ENCODE measurements at regions of chr12 and their contacts with region 1.

Region 1: DNA sequence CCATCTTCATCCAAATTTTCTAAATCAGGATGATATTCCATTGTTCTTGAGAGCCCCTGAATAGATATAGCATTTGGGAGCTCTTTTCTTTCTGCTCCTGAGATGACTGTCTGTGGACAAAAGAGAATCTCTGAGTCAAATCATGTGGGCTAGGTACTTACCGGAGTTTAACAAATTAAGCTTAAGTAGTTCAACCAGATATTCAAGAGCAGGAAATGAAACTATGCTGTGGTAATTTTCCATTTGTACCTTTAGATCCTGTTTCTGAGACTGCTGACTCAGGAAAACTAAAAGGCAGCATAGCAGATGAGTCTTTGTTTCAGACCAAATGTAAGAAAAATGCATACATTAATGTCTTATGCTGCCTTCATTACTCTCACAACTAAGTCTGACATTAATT is at the start of gene CLEC7A:
- DNase-seq: no peak
- H3K4me3 Mint-ChIP-seq: no peak within 1 kb of the TSS
- H3K27ac Mint-ChIP-seq: no peak within 1 kb of the TSS
- H3K4me1 Mint-ChIP-seq: peaks cover 16% of the 10 kb centered on the region
- H3K27me3 Mint-ChIP-seq: peaks cover 6% of the 10 kb centered on the region
- total RNA-seq, gene CLEC7A: not detected

Region 2: DNA sequence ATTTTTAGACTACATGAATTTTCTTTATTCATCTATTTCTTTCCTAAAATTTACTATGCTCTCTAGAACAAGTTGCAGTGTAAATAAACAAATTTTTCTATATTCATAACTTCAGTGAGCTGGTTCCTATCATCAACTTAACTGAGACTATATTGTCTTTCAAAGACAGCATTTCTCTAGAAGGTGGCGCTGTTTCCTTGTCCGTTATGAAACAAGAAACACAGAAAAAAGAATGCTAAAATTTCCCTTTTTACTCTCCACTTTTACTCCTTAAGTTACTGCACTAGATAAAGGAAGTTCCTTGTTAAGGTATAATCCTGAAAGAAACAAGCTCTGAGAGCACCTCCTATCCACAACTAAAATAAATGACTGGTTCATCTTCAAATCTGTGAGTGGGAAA is 189.7 kb before region 1 on chr12:
- CTCF ChIA-PET with region 1: no interaction called
- POLR2A ChIA-PET with region 1: no interaction called
- intact Hi-C with region 1: loop called (anchors 5 kb)
- DNase-seq: no peak
- H3K4me3 Mint-ChIP-seq: no peak overlapping the region
- H3K27ac Mint-ChIP-seq: no peak overlapping the region
- H3K4me1 Mint-ChIP-seq: peaks cover 16% of the 10 kb centered on the region
- H3K27me3 Mint-ChIP-seq: peaks cover 4% of the 10 kb centered on the region

Region 3: GRCh38 chr12:10147714-10148403 is 17.8 kb after region 1 on chr12:
- CTCF ChIA-PET with region 1: interaction called, 4 read pairs
- POLR2A ChIA-PET with region 1: no interaction called
- intact Hi-C with region 1: loop called (anchors 1 kb)
- DNase-seq: no peak
- H3K4me3 Mint-ChIP-seq: no peak overlapping the region
- H3K27ac Mint-ChIP-seq: no peak overlapping the region
- H3K4me1 Mint-ChIP-seq: peaks cover 10% of the 10 kb centered on the region
- H3K27me3 Mint-ChIP-seq: peaks cover 13% of the 10 kb centered on the region

Region 4: DNA sequence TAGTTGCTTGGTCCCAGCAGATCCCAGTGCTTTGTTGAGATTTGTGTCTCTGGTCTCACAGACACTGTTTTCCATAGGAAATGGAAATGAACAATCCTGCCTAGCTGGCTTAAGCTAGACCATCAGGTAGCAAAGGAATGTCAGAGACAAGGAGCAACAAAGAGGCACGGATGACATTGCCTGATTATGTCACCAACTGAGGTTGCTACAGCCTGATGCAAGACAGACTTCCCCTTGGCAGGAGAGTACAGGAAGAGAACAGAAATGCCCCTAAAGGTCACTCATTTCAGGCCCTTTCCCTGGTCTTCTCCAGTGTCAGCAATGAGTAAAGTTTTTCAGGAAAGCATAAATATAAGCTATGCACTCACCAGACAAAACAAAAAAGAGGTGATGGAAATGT is 1267.3 kb after region 1 on chr12:
- CTCF ChIA-PET with region 1: no interaction called
- POLR2A ChIA-PET with region 1: no interaction called
- intact Hi-C with region 1: no loop called
- DNase-seq: no peak
- H3K4me3 Mint-ChIP-seq: no peak overlapping the region
- H3K27ac Mint-ChIP-seq: no peak overlapping the region
- H3K4me1 Mint-ChIP-seq: no peaks in the 10 kb centered on the region
- H3K27me3 Mint-ChIP-seq: peaks cover 3% of the 10 kb centered on the region